Activated naive CD4-positive, alpha-beta T cell treated with anti-CD3 and anti-CD28 coated beads, Interleukin-2, amount 10 ng/mL, durations not matched to agents 7 days and 5 days (primary cell): ENCODE measurements at regions of chr2 and their contacts with region 1.

Region 1: GRCh38 chr2:219278655-219279516 is at the start of gene DNAJB2:
- DNase-seq: peak; percentile 99
- H3K4me3 Mint-ChIP-seq: peak within 1 kb of the TSS; percentile 92
- H3K27ac Mint-ChIP-seq: peak within 1 kb of the TSS; percentile 98
- H3K4me1 Mint-ChIP-seq: peaks cover 42% of the 10 kb centered on the region
- H3K27me3 Mint-ChIP-seq: peaks cover 14% of the 10 kb centered on the region

Region 2: DNA sequence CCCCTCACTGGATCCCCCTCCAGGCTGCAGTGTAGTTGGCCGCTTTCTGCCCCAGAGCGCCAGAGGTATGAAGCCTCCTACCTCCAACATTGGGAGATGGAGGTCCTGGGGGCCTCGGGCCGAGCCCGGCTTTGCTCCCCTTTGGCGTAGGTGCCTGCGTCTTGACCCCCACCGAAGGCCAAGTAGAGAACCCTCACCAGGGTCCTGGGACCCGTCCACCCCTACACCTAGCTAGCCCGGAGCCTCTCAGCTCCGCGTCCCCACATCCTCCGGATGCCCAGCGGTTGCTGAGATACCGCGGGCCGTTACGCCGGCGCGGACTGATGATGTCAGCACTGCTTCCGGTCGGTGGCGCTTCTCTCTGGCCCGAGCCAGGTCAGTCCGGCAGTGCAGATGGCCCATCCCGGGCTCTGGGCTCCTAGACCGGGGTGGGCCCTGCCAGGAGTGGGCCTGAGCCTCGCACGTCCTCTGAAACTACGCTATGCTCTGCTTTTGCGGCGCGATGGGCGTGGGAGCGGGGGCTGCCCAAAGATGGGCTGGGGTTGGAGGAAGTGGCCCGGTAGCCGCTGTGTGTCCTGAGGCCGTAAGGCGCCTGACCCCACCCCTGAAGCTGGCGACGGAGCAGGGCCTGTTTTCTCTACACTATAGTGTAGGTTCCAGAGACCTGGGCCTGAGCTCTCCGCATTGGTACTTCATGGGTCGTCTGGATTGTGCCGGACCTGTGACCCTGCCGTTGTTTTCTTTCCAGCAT is 33.6 kb before region 1 on chr2 and contains the starts of genes GLB1L and STK16:
- CTCF ChIA-PET with region 1: interaction called, 32 read pairs
- DNase-seq: peak; percentile 92
- H3K4me3 Mint-ChIP-seq: peak within 1 kb of the TSS; percentile 92
- H3K27ac Mint-ChIP-seq: peak within 1 kb of the TSS; percentile 95
- H3K4me1 Mint-ChIP-seq: peaks cover 74% of the 10 kb centered on the region
- H3K27me3 Mint-ChIP-seq: no peaks in the 10 kb centered on the region

Region 3: DNA sequence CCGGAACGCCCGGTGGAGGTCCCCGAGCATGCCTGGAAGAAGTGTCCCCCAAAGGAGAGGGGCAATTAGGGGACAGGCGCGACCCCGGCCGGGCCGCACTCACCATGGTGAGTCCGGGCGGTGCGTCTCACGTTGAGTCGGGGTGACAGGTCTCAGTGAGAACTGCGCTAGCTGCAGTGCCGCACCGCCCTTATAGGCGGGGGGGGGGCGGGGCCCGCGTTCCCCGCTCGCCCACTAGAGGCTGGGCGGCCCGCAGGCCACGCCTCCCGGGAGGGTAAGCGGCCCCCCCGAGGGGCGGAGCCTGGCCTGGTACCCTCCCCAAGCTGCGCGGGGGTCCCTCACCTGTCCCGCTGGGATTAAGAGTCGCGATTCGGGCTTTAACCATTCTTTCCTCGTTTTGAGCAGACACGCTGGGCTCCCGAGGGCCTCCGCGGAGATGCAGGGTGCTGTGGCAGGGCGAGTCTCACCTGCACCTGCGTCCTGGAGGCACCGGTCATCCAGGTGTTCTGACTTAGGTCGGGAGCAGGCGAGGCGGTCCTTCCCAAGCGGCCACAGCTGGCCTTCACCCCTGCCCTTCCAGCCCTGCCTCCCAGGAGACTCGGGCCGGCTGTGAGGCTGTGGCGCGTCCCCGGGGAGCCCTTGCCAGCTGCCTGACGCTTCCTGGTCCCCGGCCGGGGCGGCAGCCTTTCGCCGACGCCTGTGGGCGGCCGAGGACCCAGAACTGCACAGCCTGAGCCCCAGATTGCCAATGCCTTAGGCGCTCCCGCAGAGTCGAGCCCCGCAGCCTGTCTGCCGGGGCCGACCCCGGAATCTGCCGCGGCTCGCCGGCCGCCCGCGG is 24.9 kb before region 1 on chr2 and contains the start of gene TUBA4A:
- CTCF ChIA-PET with region 1: interaction called, 32 read pairs
- DNase-seq: peak; percentile 93
- H3K4me3 Mint-ChIP-seq: peak within 1 kb of the TSS; percentile 92
- H3K27ac Mint-ChIP-seq: peak within 1 kb of the TSS; percentile 95
- H3K4me1 Mint-ChIP-seq: peaks cover 53% of the 10 kb centered on the region
- H3K27me3 Mint-ChIP-seq: peaks cover 8% of the 10 kb centered on the region

Region 4: GRCh38 chr2:219261024-219261855 is 17.6 kb before region 1 on chr2:
- CTCF ChIA-PET with region 1: interaction called, 31 read pairs
- DNase-seq: no peak
- H3K4me3 Mint-ChIP-seq: no peak overlapping the region
- H3K27ac Mint-ChIP-seq: no peak overlapping the region
- H3K4me1 Mint-ChIP-seq: peaks cover 3% of the 10 kb centered on the region
- H3K27me3 Mint-ChIP-seq: peaks cover 39% of the 10 kb centered on the region

Region 5: GRCh38 chr2:219308142-219309093 is 29.5 kb after region 1 on chr2:
- CTCF ChIA-PET with region 1: no interaction called
- DNase-seq: peak; percentile 85
- H3K4me3 Mint-ChIP-seq: no peak overlapping the region
- H3K27ac Mint-ChIP-seq: no peak overlapping the region
- H3K4me1 Mint-ChIP-seq: no peaks in the 10 kb centered on the region
- H3K27me3 Mint-ChIP-seq: peaks cover 44% of the 10 kb centered on the region

Region 6: DNA sequence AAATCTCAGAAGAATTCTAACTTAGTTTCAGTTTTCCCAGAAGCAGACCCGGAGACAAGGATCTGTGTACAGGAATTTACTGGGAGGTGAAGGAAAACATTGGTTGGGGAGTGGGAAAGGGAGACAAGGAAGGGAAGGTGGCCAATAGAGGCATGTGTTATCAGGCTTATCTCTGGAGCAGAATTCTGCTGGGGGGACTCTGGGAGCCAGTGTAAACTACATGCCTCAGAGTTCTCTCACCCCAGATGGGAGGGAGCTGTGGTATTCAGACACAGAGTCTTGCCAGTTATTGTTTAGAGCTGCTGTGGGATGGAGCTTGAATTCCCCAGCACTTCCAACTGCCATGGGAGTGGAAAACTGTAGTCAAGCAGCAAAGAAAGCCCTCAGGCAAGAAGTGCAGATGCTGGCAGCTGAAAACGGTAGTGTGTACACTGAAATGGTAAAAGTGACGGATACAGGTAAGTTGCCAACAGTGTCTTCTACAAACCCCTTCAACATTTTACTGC is 89.9 kb after region 1 on chr2:
- CTCF ChIA-PET with region 1: no interaction called
- DNase-seq: no peak
- H3K4me3 Mint-ChIP-seq: no peak overlapping the region
- H3K27ac Mint-ChIP-seq: no peak overlapping the region
- H3K4me1 Mint-ChIP-seq: no peaks in the 10 kb centered on the region
- H3K27me3 Mint-ChIP-seq: no peaks in the 10 kb centered on the region